ENCODE measurements at regions of chr5 and their contacts with region 1.

Region 1: GRCh38 chr5:120767178-120767820 is 303.2 kb downstream of the PRR16 start:
- DNase-seq: no peak
- H3K4me3 Mint-ChIP-seq: no peak overlapping the region
- H3K27ac Mint-ChIP-seq: no peak overlapping the region
- H3K4me1 Mint-ChIP-seq: no peaks in the 10 kb centered on the region
- H3K27me3 Mint-ChIP-seq: no peaks in the 10 kb centered on the region

Region 2: GRCh38 chr5:121033334-121033733 is 266.0 kb after region 1 on chr5:
- CTCF ChIA-PET with region 1: no interaction called
- intact Hi-C with region 1: no loop called
- DNase-seq: no peak
- H3K4me3 Mint-ChIP-seq: no peak overlapping the region
- H3K27ac Mint-ChIP-seq: no peak overlapping the region
- H3K4me1 Mint-ChIP-seq: no peaks in the 10 kb centered on the region
- H3K27me3 Mint-ChIP-seq: no peaks in the 10 kb centered on the region

Region 3: GRCh38 chr5:122165559-122166078 is 1398.3 kb after region 1 on chr5:
- CTCF ChIA-PET with region 1: no interaction called
- intact Hi-C with region 1: loop called (anchors 5 kb)
- DNase-seq: no peak
- H3K4me3 Mint-ChIP-seq: no peak overlapping the region
- H3K27ac Mint-ChIP-seq: no peak overlapping the region
- H3K4me1 Mint-ChIP-seq: no peaks in the 10 kb centered on the region
- H3K27me3 Mint-ChIP-seq: peaks cover 5% of the 10 kb centered on the region

Measured in activated naive CD4-positive, alpha-beta T cell treated with anti-CD3 and anti-CD28 coated beads for 36 hours (primary cell).